ENCODE measurements at regions of chr11 and their contacts with region 1.

Region 1: GRCh38 chr11:9681583-9682372 is 17.9 kb downstream of the SWAP70 start:
- DNase-seq: no peak
- ATAC-seq: no peak

Region 2: DNA sequence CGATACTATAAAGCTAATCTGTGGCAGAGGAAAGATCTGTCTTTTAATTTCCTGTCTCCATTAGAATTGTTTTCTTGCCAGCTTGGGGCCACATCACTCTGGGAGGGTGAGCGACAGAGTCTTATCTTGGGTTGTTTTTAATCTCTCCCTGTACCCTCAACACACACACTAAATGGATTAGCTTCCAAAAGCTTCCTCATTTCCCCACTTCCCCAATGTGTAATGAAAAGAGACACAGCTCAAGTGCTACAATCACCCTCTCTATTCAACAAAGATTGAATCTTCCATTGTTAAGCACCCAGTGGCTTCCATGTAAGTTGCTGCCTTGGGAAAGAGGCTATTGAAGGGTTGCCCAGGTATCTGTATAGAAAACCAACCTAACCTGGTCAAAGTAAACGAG is 732.9 kb before region 1 on chr11:
- intact Hi-C with region 1: no loop called
- DNase-seq: no peak
- ATAC-seq: no peak

Region 3: DNA sequence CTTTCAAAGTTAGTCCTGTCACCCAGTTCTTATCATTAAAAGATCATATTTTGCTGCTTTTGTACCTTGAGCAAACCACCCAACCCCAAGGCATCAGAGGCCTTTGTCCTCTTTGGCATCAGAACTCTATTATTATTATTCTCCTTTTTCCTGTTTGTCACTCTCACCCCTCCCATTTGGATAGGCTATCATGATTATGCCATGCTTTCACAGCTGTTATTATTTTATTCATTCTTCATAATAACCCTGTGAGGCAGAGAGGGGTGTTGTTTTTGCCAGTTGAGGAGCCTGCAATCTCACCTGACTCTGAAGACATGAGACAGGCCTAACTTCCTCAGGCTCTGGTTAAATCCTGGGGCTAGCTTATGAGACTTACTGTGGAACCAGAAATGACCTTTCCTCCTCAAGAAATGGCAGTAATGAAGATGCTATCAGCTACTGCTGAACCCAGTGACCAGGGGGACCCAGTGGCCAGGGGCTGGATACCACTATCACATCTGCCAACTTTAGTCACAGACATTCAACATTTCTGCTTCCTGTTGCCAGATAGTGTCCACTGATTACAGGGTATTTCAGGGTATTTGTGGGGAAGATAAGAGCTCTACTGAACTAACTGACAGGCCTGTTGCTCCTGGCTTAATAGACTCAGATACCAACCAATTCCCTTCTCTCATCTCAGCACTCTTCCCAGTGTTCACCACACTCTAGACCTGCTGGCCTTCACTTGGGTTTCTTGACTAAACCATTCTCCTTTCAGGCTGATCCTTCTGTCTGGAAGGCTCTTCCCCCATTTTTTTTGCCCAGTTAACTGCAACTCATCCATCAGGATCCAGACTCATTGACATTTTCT is 29.7 kb before region 1 on chr11:
- intact Hi-C with region 1: no loop called
- DNase-seq: no peak
- ATAC-seq: no peak

Region 4: DNA sequence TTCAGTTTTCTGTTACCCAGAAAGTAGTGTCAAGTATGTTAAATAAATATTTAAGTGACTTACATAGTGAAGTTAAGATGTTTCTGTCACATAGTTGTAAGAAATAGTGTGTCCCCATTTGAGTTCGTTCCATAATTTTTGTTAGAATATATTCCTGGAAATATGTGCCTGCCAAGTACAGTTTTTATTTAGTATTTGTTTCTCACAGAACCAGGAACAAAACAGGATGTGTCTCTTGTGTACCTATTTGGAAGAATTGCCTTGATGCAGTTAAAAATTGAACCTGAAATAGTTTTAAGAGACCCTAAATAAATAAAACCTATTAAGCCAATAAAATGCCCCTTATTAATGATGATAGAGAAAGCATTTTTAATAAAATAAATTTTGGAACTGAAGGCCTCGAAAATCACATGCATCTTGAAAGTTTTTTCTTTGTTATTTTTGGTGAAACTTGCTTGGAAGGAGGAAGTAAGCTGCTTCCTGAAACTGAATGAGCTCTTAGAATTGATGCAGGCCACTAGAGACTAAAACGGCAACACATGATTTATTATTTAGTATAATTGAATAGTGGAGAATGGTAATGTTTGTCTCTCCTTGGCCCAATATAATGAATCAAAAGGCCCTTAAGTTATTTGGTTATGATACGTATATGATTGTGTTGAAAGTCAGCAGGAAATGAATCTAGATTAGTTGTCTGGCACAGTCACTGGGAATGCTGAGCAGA is 38.0 kb after region 1 on chr11:
- intact Hi-C with region 1: loop called (anchors 5 kb)
- DNase-seq: no peak
- ATAC-seq: peak; percentile 18